ENCODE measurements at regions of chr4 and their contacts with region 1.

Region 1: GRCh38 chr4:87093443-87094123 is 126.8 kb downstream of the KLHL8 start:
- DNase-seq: no peak

Region 2: GRCh38 chr4:86536151-86536550 is 557.4 kb before region 1 on chr4:
- intact Hi-C with region 1: no loop called
- DNase-seq: no peak

Region 3: DNA sequence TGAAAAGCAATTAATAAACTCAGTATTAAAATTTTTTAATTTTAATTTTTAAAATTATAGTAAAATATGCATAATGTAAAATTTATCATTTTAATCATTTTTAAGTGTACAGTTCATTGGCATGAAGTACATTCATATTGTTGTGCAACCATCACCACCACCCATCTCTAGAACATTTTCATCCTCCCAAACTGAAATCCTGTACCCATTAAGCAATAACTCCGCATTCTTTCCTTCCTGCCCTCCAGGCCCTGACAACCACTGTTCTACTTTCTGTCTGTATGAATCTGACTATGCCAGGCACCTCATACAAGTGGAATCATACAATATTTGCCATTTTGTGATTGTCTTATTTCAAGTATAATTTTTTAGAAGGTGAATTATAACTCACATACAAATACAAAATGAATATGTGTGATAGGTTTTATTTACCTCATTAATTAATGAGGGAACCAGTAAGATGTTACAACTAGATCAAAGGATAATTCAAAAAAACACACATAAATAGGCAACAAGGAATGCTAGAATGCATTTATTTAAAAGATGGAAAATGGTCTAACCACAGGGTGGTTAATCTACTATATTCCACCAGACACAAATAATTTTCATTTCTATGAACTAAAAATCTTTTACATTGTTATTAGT is 171.9 kb before region 1 on chr4:
- intact Hi-C with region 1: loop called (anchors 2 to 10 kb)
- DNase-seq: no peak

Region 4: GRCh38 chr4:86927843-86928395 is 165.7 kb before region 1 on chr4:
- intact Hi-C with region 1: loop called (anchors 2 to 10 kb)
- DNase-seq: no peak